ENCODE measurements at regions of chr10 and their contacts with region 1.

Region 1: DNA sequence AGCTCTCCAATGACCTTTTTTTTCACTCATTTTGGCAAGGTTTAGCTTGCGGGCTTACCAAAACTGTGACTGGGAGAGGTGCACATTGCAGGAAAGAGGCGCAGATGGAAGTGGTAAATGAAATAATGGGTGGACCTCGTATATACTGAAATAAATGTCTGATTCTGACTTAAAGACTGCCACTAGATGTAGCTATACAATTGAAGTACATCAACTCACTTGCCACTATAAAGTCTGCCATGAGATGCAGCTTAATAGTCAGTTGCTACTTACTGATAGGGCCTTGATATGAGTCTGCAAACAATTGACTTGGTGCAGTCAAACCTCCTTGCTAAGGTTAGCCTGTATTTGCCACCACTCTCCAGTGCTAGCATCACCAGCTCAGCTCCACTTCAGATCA is 525.9 kb upstream of the MBL2 start:
- DNase-seq: no peak
- H3K4me3 ChIP-seq: no peak overlapping the region
- H3K27ac ChIP-seq: no peak overlapping the region
- H3K4me1 ChIP-seq: no peaks in the 10 kb centered on the region
- CTCF ChIP-seq: no peak

Region 2: GRCh38 chr10:52066383-52066782 is 1232.1 kb before region 1 on chr10:
- CTCF ChIA-PET with region 1: no interaction called
- POLR2A ChIA-PET with region 1: no interaction called
- intact Hi-C with region 1: no loop called
- DNase-seq: peak; percentile 2
- H3K4me3 ChIP-seq: no peak overlapping the region
- H3K27ac ChIP-seq: no peak overlapping the region
- H3K4me1 ChIP-seq: no peaks in the 10 kb centered on the region
- CTCF ChIP-seq: no peak

Region 3: GRCh38 chr10:53269482-53269881 is 29.0 kb before region 1 on chr10:
- CTCF ChIA-PET with region 1: no interaction called
- POLR2A ChIA-PET with region 1: no interaction called
- intact Hi-C with region 1: loop called (anchors 1 kb)
- DNase-seq: no peak
- H3K4me3 ChIP-seq: no peak overlapping the region
- H3K27ac ChIP-seq: no peak overlapping the region
- H3K4me1 ChIP-seq: no peaks in the 10 kb centered on the region
- CTCF ChIP-seq: no peak

Measured in OCI-LY7 (cell line).